T-cell (primary cell): ENCODE measurements at regions of chr15 and their contacts with region 1.

Region 1: GRCh38 chr15:52331490-52332240 is 36.1 kb upstream of the MYO5C start:
- DNase-seq: peak in 34 of 35 experiments; percentile 5 to 81 (median 29)
- ATAC-seq: peak; percentile 96 to 100 (median 100)
- H3K4me3 ChIP-seq: no peak overlapping the region
- H3K4me3 Mint-ChIP-seq: peak overlapping the region in 2 of 3 donors; percentile 26 to 51
- H3K27ac ChIP-seq: peak overlapping the region; percentile 26
- H3K27ac Mint-ChIP-seq: peak overlapping the region; percentile 86 to 87
- H3K4me1 ChIP-seq: peaks cover 7% of the 10 kb centered on the region in 2 experiments
- H3K4me1 Mint-ChIP-seq: peaks cover 16 to 21% (median 17%) of the 10 kb centered on the region in 3 donors
- H3K27me3 ChIP-seq: no peaks in the 10 kb centered on the region
- H3K27me3 Mint-ChIP-seq: no peaks in the 10 kb centered on the region

Region 2: DNA sequence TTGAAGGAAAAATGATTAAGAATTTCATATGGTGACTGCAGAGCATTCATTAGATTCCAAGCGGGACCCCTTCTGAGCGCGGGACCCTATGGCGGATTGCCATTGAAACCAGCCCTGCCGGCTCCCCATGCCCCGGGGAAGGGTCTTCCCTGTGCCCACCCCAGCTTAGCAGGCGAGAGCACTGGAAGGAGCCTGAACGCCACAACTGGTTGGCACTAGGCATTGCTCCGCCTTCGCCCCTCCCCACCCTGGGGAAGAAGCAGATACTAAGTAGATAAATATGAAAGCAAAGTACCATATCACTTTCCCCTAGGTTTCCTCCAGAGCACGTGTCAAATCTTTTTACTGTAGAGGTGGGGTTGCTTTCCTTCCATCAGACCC is 1064.0 kb before region 1 on chr15:
- CTCF ChIA-PET with region 1: no interaction called
- POLR2A ChIA-PET with region 1: no interaction called
- DNase-seq: no peak
- ATAC-seq: no peak
- H3K4me3 ChIP-seq: no peak overlapping the region
- H3K4me3 Mint-ChIP-seq: no peak overlapping the region
- H3K27ac ChIP-seq: no peak overlapping the region
- H3K27ac Mint-ChIP-seq: no peak overlapping the region
- H3K4me1 ChIP-seq: no peaks in the 10 kb centered on the region
- H3K4me1 Mint-ChIP-seq: peaks cover 5 to 7% (median 6%) of the 10 kb centered on the region in 3 donors
- H3K27me3 ChIP-seq: peaks cover 6 to 22% of the 10 kb centered on the region in 2 experiments
- H3K27me3 Mint-ChIP-seq: peaks cover 25 to 37% of the 10 kb centered on the region in 2 donors

Region 3: GRCh38 chr15:52463638-52464037 is 132.0 kb after region 1 on chr15:
- CTCF ChIA-PET with region 1: interaction called in 1 of 2 experiments, 12 read pairs
- POLR2A ChIA-PET with region 1: no interaction called
- DNase-seq: peak in 1 of 35 experiments; percentile 38
- ATAC-seq: peak in 3 of 4 experiments; percentile 12 to 58 (median 40)
- H3K4me3 ChIP-seq: no peak overlapping the region
- H3K4me3 Mint-ChIP-seq: peak overlapping the region; percentile 5 to 71 (median 62)
- H3K27ac ChIP-seq: peak overlapping the region; percentile 76
- H3K27ac Mint-ChIP-seq: peak overlapping the region; percentile 95 to 96
- H3K4me1 ChIP-seq: peaks cover 0 to 27% of the 10 kb centered on the region in 2 experiments
- H3K4me1 Mint-ChIP-seq: peaks cover 36 to 50% (median 37%) of the 10 kb centered on the region in 3 donors
- H3K27me3 ChIP-seq: no peaks in the 10 kb centered on the region
- H3K27me3 Mint-ChIP-seq: no peaks in the 10 kb centered on the region